ENCODE measurements at regions of chr3 and their contacts with region 1.

Region 1: GRCh38 chr3:12994607-12995388 is 78.4 kb downstream of the IQSEC1 start:
- DNase-seq: peak; percentile 88
- ATAC-seq: peak; percentile 91
- H3K4me3 Mint-ChIP-seq: peak overlapping the region; percentile 92
- H3K27ac Mint-ChIP-seq: peak overlapping the region; percentile 73
- H3K4me1 Mint-ChIP-seq: peaks cover 22% of the 10 kb centered on the region
- H3K27me3 Mint-ChIP-seq: no peaks in the 10 kb centered on the region

Region 2: DNA sequence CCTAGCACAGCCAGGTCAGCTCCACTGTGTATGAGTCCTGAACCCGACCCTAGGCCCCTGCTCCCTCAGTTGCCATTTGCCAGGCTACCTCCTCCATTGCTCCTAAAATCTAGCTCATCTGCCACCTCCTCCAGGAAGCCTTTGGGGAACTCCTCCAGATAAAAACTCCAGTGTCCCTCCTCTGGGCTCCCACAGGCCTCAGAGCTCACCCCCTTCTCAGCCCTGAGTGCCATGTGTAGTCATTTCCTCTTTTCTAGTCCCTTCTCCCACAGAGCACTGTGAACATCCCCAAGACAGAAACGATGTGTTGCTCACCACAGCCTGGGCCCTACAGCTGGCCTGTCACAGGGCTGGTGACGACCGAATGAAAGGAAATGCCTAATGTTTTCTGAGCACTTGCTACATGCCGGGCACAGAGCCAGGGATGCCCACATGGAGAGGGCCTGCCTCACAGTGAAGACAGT is 17.5 kb after region 1 on chr3:
- CTCF ChIA-PET with region 1: interaction called, 120 read pairs
- DNase-seq: peak; percentile 83
- ATAC-seq: peak; percentile 22
- H3K4me3 Mint-ChIP-seq: peak overlapping the region; percentile 66
- H3K27ac Mint-ChIP-seq: peak overlapping the region; percentile 100
- H3K4me1 Mint-ChIP-seq: peaks cover 80% of the 10 kb centered on the region
- H3K27me3 Mint-ChIP-seq: no peaks in the 10 kb centered on the region

Region 3: DNA sequence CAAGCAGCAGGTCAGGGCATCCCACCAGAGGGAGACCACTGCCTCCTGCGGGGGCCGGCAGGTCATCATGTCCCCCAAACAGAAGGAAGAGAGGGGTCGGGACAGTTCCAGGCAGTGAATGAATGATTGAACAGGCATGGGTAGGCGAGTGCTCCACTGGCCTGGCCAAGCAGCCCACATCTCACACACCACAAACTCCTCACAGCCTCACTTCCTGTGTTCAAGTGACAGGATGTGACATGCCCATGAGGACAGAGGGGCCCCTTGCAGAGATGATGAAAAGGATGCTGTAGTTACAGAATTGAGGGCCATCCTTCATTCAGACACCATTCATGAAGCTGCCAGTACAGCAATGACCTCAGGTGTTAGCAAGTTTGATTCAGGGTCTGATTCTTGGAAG is 74.7 kb after region 1 on chr3:
- CTCF ChIA-PET with region 1: interaction called, 13 read pairs
- DNase-seq: peak; percentile 92
- ATAC-seq: peak; percentile 80
- H3K4me3 Mint-ChIP-seq: peak overlapping the region; percentile 63
- H3K27ac Mint-ChIP-seq: peak overlapping the region; percentile 97
- H3K4me1 Mint-ChIP-seq: peaks cover 45% of the 10 kb centered on the region
- H3K27me3 Mint-ChIP-seq: peaks cover 9% of the 10 kb centered on the region

Region 4: GRCh38 chr3:13177641-13178040 is 182.8 kb after region 1 on chr3:
- CTCF ChIA-PET with region 1: no interaction called
- DNase-seq: no peak
- ATAC-seq: no peak
- H3K4me3 Mint-ChIP-seq: no peak overlapping the region
- H3K27ac Mint-ChIP-seq: no peak overlapping the region
- H3K4me1 Mint-ChIP-seq: no peaks in the 10 kb centered on the region
- H3K27me3 Mint-ChIP-seq: peaks cover 5% of the 10 kb centered on the region